Activated CD8-positive, alpha-beta T cell treated with anti-CD3 and anti-CD28 coated beads, Interleukin-2, amount 10 ng/mL, durations not matched to agents 7 days and 5 days (primary cell): ENCODE measurements at regions of chr9 and their contacts with region 1.

Region 1: GRCh38 chr9:121399883-121400607 is 30.0 kb upstream of the STOM start:
- DNase-seq: no peak
- ATAC-seq: peak; percentile 57
- H3K4me3 Mint-ChIP-seq: no peak overlapping the region
- H3K27ac Mint-ChIP-seq: no peak overlapping the region
- H3K4me1 Mint-ChIP-seq: peaks cover 7% of the 10 kb centered on the region
- H3K27me3 Mint-ChIP-seq: peaks cover 19% of the 10 kb centered on the region

Region 2: GRCh38 chr9:121383715-121384114 is 16.3 kb before region 1 on chr9:
- CTCF ChIA-PET with region 1: interaction called, 16 read pairs
- POLR2A ChIA-PET with region 1: no interaction called
- DNase-seq: no peak
- ATAC-seq: no peak
- H3K4me3 Mint-ChIP-seq: no peak overlapping the region
- H3K27ac Mint-ChIP-seq: no peak overlapping the region
- H3K4me1 Mint-ChIP-seq: no peaks in the 10 kb centered on the region
- H3K27me3 Mint-ChIP-seq: peaks cover 19% of the 10 kb centered on the region